ENCODE measurements at regions of chr15 and their contacts with region 1.

Region 1: DNA sequence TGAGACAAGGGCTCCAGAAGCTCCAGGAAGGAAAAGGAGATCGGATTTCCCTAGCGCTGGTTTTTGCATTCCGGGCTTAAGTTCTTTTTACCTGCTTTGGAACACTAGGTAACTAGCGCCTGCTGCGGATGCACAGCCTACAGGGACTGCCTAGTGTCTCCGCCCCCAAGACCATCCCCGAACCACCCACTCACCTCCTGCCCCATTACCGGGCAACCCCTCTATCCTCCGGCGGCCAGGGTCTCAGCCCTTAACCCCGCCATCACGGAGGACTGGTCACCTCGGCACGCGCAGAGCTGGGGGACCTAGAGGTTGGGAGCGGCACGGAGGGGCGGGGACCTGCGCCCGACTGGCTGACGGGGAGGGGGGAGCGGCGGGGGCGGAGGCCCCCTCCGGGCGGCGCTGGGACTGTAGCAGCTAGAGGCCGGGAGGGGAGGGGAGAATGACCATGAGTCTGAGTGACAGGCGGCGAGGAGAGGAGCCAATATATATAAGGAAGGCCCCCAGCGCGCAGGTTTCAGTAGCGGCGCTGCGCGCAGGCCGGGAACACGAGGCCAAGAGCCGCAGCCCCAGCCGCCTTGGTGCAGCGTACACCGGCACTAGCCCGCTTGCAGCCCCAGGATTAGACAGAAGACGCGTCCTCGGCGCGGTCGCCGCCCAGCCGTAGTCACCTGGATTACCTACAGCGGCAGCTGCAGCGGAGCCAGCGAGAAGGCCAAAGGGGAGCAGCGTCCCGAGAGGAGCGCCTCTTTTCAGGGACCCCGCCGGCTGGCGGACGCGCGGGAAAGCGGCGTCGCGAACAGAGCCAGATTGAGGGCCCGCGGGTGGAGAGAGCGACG is at the start of gene DLL4:
- DNase-seq: peak; percentile 80
- H3K4me3 ChIP-seq: peak within 1 kb of the TSS; percentile 46 to 60
- H3K27ac ChIP-seq: no peak within 1 kb of the TSS
- H3K4me1 ChIP-seq: peaks cover 17 to 44% of the 10 kb centered on the region in 2 experiments; a peak in 2 of 4 replicates
- H3K27me3 ChIP-seq: peaks cover 53% of the 10 kb centered on the region
- CTCF ChIP-seq: no peak
- EP300 ChIP-seq: no peak
- RAD21 ChIP-seq: no peak
- polyA plus RNA-seq, gene DLL4: 0.03 TPM in 2 replicates

Region 2: GRCh38 chr15:40914486-40914885 is 14.6 kb before region 1 on chr15:
- CTCF ChIA-PET with region 1: interaction called, 675 read pairs
- POLR2A ChIA-PET with region 1: interaction called, 3 read pairs
- DNase-seq: no peak
- H3K4me3 ChIP-seq: no peak overlapping the region
- H3K27ac ChIP-seq: no peak overlapping the region
- H3K4me1 ChIP-seq: peaks cover 0 to 20% of the 10 kb centered on the region in 2 experiments; a peak in 1 of 4 replicates
- H3K27me3 ChIP-seq: no peaks in the 10 kb centered on the region
- CTCF ChIP-seq: no peak
- EP300 ChIP-seq: no peak
- RAD21 ChIP-seq: 0 out of 2 replicates have a peak, but pooled peaks have one; percentile 10

Region 3: GRCh38 chr15:41022487-41023090 is 93.5 kb after region 1 on chr15:
- CTCF ChIA-PET with region 1: interaction called, 40 read pairs
- POLR2A ChIA-PET with region 1: no interaction called
- DNase-seq: peak; percentile 61
- H3K4me3 ChIP-seq: no peak overlapping the region; a peak in 1 of 4 replicates
- H3K27ac ChIP-seq: no peak overlapping the region
- H3K4me1 ChIP-seq: peaks cover 2 to 23% of the 10 kb centered on the region in 2 experiments; a peak in 3 of 4 replicates
- H3K27me3 ChIP-seq: no peaks in the 10 kb centered on the region
- CTCF ChIP-seq: peak; percentile 83
- EP300 ChIP-seq: no peak
- RAD21 ChIP-seq: peak; percentile 91

Region 4: DNA sequence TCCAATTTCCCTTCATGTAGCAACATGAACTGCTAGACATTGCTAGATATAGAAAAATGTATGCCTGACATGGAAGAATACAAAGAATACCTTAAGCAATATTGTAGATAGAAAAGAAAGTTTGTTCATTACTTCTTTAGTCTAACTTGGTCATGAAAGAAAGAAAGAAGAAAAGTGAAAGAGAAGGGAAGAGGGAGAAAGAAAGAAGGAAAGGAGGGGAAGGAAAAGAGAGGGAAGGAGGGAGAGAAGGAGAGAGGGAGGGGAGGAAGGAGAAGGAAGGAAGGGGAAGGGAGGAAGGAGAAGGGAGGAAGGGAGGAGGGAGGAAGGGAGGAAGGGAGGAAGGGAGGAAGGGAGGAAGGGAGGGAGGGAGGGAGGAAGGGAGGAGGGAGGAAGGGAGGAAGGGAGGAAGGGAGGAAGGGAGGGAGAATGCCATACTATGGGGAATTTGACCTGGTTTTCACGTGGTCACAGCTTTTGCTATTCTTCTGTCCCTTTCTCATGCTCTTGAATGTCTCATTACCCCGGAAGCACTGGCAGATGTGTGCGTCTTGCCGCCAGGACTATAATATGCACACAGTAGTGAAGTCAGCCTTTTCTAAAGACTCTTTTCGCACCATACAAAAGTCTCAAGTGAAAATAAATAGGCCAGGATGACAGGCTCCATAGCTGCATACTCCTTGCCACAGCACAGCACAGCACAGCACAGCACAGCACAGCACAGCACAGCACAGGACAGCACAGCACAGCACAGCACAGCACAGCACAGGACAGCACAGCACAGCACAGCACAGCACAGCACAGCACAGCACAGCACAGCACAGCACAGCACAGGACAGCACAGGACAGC is 102.4 kb after region 1 on chr15:
- CTCF ChIA-PET with region 1: interaction called, 20 read pairs
- POLR2A ChIA-PET with region 1: no interaction called
- DNase-seq: no peak
- H3K4me3 ChIP-seq: no peak overlapping the region
- H3K27ac ChIP-seq: no peak overlapping the region
- H3K4me1 ChIP-seq: no peaks in the 10 kb centered on the region
- H3K27me3 ChIP-seq: no peaks in the 10 kb centered on the region
- CTCF ChIP-seq: no peak
- EP300 ChIP-seq: no peak
- RAD21 ChIP-seq: no peak

Region 5: DNA sequence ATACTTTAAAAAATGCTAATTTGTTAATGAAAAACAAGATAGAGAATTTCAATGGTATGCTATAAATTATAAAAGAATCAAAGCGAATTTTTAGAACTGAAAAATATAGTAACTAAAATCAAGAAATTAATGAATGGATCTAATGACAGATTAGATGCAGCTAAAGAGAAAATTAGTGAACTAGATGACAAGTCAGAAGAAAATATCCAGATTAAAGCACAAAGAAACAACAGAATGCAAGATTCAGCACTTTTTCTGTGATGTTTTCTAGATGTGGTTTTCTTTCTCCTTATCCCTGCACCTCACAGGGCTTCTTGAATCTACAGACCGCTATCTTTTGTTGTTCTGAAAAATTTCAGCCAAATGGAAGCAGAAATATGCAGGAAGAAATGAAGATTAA is 132.6 kb after region 1 on chr15:
- CTCF ChIA-PET with region 1: no interaction called
- POLR2A ChIA-PET with region 1: no interaction called
- DNase-seq: no peak
- H3K4me3 ChIP-seq: no peak overlapping the region
- H3K27ac ChIP-seq: no peak overlapping the region
- H3K4me1 ChIP-seq: no peaks in the 10 kb centered on the region
- H3K27me3 ChIP-seq: no peaks in the 10 kb centered on the region
- CTCF ChIP-seq: no peak
- EP300 ChIP-seq: no peak
- RAD21 ChIP-seq: no peak

Region 6: DNA sequence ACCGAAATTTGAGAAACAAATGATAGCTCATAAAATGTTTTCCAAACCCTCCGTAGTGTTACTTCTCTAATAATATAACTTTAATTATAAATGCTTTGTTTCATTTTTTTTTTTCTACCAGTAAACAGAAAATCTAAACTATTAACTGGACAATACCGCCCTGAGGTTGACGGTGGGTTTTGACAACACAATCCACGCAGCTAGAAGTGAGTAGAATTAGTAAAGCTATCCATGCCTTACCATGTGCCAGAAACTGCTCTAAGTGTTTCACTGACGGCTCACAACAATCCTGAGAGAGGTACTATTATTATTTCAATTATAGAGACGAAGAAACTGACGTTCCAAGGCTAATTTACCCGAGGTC is 472.8 kb after region 1 on chr15:
- CTCF ChIA-PET with region 1: no interaction called
- POLR2A ChIA-PET with region 1: no interaction called
- DNase-seq: no peak
- H3K4me3 ChIP-seq: peak overlapping the region; percentile 64 to 93
- H3K27ac ChIP-seq: peak overlapping the region; percentile 74 to 77
- H3K4me1 ChIP-seq: no peaks in the 10 kb centered on the region; a peak in 1 of 4 replicates
- H3K27me3 ChIP-seq: no peaks in the 10 kb centered on the region
- CTCF ChIP-seq: no peak
- EP300 ChIP-seq: no peak
- RAD21 ChIP-seq: no peak